ENCODE measurements at regions of chr13 and their contacts with region 1.

Region 1: GRCh38 chr13:28796938-28797257 is 23.2 kb upstream of the MTUS2 start:
- DNase-seq: no peak
- ATAC-seq: peak in 1 of 2 experiments; percentile 53; a peak in 4 of 6 replicates
- H3K4me3 ChIP-seq: no peak overlapping the region; the same call in 2 of the 3 replicates
- H3K27ac ChIP-seq: no peak overlapping the region
- H3K4me1 ChIP-seq: no peaks in the 10 kb centered on the region
- CTCF ChIP-seq: no peak
- EP300 ChIP-seq: no peak
- POLR2A ChIP-seq: no peak
- RAD21 ChIP-seq: no peak

Region 2: DNA sequence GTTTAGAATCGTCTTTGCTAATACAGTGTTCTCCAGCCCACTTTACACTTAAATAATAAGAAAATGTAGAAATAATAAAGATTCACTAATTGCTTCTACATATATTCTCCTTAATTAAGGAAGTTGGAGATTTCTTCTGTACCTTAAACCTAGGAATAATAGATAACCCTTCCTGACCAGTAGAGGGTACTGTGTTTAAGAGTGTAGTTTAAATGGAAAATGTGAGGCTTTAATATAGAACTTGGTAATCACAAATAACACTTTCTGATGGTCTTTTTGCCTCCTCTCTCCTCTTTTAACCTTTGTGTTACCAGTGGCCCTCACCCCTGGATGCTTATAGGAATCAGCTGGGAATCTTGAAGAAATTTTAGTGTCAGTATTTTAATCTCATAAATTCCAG is 117.3 kb before region 1 on chr13:
- CTCF ChIA-PET with region 1: interaction called, 11 read pairs
- POLR2A ChIA-PET with region 1: no interaction called
- DNase-seq: no peak
- ATAC-seq: peak; percentile 73 to 79; a peak in 5 of 6 replicates
- H3K4me3 ChIP-seq: no peak overlapping the region
- H3K27ac ChIP-seq: no peak overlapping the region
- H3K4me1 ChIP-seq: no peaks in the 10 kb centered on the region
- CTCF ChIP-seq: peak; percentile 45
- EP300 ChIP-seq: no peak
- POLR2A ChIP-seq: no peak
- RAD21 ChIP-seq: peak; percentile 36 to 40

Measured in A549 (cell line).